Endothelial cell of umbilical vein (primary cell): ENCODE measurements at regions of chr17 and their contacts with region 1.

Region 1: GRCh38 chr17:77054936-77055335 is 85.8 kb upstream of the SEC14L1 start:
- DNase-seq: no peak
- H3K4me3 ChIP-seq: no peak overlapping the region
- H3K27ac ChIP-seq: no peak overlapping the region
- H3K4me1 ChIP-seq: no peaks in the 10 kb centered on the region
- H3K27me3 ChIP-seq: peaks cover 5 to 6% of the 10 kb centered on the region in 2 experiments
- CTCF ChIP-seq: no peak
- POLR2A ChIP-seq: no peak

Region 2: DNA sequence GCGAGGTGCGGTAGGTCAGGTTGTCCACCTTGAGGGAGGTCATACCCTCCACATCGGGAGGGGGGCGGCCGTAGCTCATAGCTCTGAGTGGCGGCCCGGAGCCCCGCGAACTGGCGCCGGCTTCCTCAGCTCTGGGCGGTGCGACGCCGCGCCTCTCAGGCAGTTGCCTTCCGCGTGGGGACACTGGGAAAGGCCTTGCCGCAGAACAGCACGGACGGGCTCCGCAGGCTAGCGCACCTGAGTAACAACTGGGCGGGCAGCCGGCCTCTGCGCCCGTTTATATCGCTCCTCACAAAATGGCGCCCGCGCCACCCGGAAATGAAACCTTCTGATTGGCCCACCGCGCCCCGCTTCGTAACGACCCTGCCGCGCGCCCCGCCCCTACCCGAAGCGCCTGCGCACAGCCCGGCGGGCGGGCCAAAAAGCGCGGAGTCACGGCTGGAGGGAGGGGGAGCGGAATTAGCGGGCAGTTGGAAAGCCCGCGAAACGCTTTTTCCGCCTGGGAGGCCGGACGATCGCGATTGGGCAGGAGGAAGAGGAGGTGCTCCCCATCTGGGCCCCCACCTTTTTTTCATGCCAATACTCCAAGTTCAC is 317.8 kb before region 1 on chr17 and contains the start of gene SRSF2:
- CTCF ChIA-PET with region 1: interaction called, 10 read pairs
- POLR2A ChIA-PET with region 1: no interaction called
- dilution Hi-C with region 1: no loop called
- intact Hi-C with region 1: loop called (anchors 5 kb)
- DNase-seq: peak; percentile 99
- H3K4me3 ChIP-seq: peak within 1 kb of the TSS; percentile 82 to 96 (median 90)
- H3K27ac ChIP-seq: peak within 1 kb of the TSS; percentile 92
- H3K4me1 ChIP-seq: peaks cover 38% of the 10 kb centered on the region
- H3K27me3 ChIP-seq: no peaks in the 10 kb centered on the region
- CTCF ChIP-seq: no peak
- POLR2A ChIP-seq: peak; percentile 100
- total RNA-seq, gene SRSF2: 303 and 307 TPM in 2 replicates

Region 3: GRCh38 chr17:76824093-76824492 is 230.8 kb before region 1 on chr17:
- CTCF ChIA-PET with region 1: interaction called, 12 read pairs
- POLR2A ChIA-PET with region 1: no interaction called
- dilution Hi-C with region 1: no loop called
- intact Hi-C with region 1: no loop called
- DNase-seq: no peak
- H3K4me3 ChIP-seq: no peak overlapping the region
- H3K27ac ChIP-seq: no peak overlapping the region
- H3K4me1 ChIP-seq: no peaks in the 10 kb centered on the region
- H3K27me3 ChIP-seq: no peaks in the 10 kb centered on the region
- CTCF ChIP-seq: no peak
- POLR2A ChIP-seq: no peak

Region 4: GRCh38 chr17:76887802-76888201 is 167.1 kb before region 1 on chr17:
- CTCF ChIA-PET with region 1: interaction called, 16 read pairs
- POLR2A ChIA-PET with region 1: no interaction called
- dilution Hi-C with region 1: no loop called
- intact Hi-C with region 1: no loop called
- DNase-seq: no peak
- H3K4me3 ChIP-seq: no peak overlapping the region
- H3K27ac ChIP-seq: no peak overlapping the region
- H3K4me1 ChIP-seq: no peaks in the 10 kb centered on the region
- H3K27me3 ChIP-seq: no peaks in the 10 kb centered on the region
- CTCF ChIP-seq: peak in 1 of 2 donors; percentile 5
- POLR2A ChIP-seq: no peak

Region 5: GRCh38 chr17:76994237-76994637 is 60.7 kb before region 1 on chr17:
- CTCF ChIA-PET with region 1: interaction called, 22 read pairs
- POLR2A ChIA-PET with region 1: no interaction called
- dilution Hi-C with region 1: no loop called
- intact Hi-C with region 1: no loop called
- DNase-seq: no peak
- H3K4me3 ChIP-seq: no peak overlapping the region
- H3K27ac ChIP-seq: no peak overlapping the region
- H3K4me1 ChIP-seq: no peaks in the 10 kb centered on the region
- H3K27me3 ChIP-seq: peaks cover 11% of the 10 kb centered on the region in 2 experiments
- CTCF ChIP-seq: no peak
- POLR2A ChIP-seq: no peak

Region 6: DNA sequence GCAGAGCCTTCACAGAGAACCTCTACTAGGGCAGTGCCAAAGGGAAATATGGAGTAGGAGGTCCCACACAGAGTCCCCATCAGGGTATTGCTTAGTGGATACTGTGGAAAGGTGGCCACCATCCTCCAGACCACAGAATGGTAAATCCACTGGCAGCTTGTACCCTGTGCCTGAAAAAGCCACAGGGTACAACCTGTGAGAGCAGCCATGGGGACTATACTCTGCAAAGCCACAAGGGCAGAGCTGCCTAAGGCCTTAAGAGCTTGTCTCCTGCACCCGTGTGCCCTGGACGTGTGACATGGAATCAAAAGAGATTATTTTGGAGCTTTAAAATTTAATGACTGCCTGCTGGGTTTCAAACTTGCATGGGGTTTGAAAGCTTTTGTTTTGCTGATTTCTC is 32.2 kb before region 1 on chr17:
- CTCF ChIA-PET with region 1: interaction called, 29 read pairs
- POLR2A ChIA-PET with region 1: no interaction called
- dilution Hi-C with region 1: no loop called
- intact Hi-C with region 1: no loop called
- DNase-seq: no peak
- H3K4me3 ChIP-seq: no peak overlapping the region
- H3K27ac ChIP-seq: no peak overlapping the region
- H3K4me1 ChIP-seq: no peaks in the 10 kb centered on the region
- H3K27me3 ChIP-seq: peaks cover 6 to 7% of the 10 kb centered on the region in 2 experiments
- CTCF ChIP-seq: no peak
- POLR2A ChIP-seq: no peak

Region 7: DNA sequence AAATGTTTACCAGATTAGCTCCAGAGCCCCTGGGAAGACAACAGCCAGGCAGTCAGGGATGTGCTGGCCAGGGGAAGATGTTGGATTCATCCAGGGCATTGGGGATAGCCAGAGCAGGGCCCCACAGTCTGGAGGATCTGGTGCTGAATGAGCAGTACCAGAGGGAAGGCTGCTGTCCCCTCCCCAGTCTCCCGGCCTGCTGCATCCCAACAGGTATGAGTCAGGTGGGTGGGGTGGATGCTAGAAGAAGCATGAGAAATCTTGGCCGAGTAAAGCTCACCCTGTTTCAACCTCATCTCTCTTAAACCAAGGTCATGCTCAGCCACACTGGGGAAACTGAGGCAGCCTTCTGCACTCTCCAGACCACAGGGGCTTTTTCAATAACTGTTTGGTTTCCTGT is 14.0 kb after region 1 on chr17:
- CTCF ChIA-PET with region 1: interaction called, 116 read pairs
- POLR2A ChIA-PET with region 1: interaction called, 4 read pairs
- dilution Hi-C with region 1: no loop called
- intact Hi-C with region 1: no loop called
- DNase-seq: no peak
- H3K4me3 ChIP-seq: no peak overlapping the region
- H3K27ac ChIP-seq: no peak overlapping the region
- H3K4me1 ChIP-seq: no peaks in the 10 kb centered on the region
- H3K27me3 ChIP-seq: peaks cover 9% of the 10 kb centered on the region in 2 experiments
- CTCF ChIP-seq: no peak
- POLR2A ChIP-seq: no peak

Region 8: GRCh38 chr17:77127735-77128361 is 72.9 kb after region 1 on chr17:
- CTCF ChIA-PET with region 1: no interaction called
- POLR2A ChIA-PET with region 1: no interaction called
- dilution Hi-C with region 1: no loop called
- intact Hi-C with region 1: no loop called
- DNase-seq: no peak
- H3K4me3 ChIP-seq: no peak overlapping the region
- H3K27ac ChIP-seq: peak overlapping the region; percentile 98
- H3K4me1 ChIP-seq: peaks cover 43% of the 10 kb centered on the region
- H3K27me3 ChIP-seq: no peaks in the 10 kb centered on the region
- CTCF ChIP-seq: no peak
- POLR2A ChIP-seq: no peak